CD4-positive, alpha-beta T cell (primary cell): ENCODE measurements at regions of chr14 and their contacts with region 1.

Region 1: GRCh38 chr14:67571272-67571850 is 28.7 kb downstream of the PIGH start:
- DNase-seq: peak; percentile 54 to 81 (median 66)
- ATAC-seq: peak; percentile 93
- H3K4me3 ChIP-seq: no peak overlapping the region
- H3K4me3 Mint-ChIP-seq: no peak overlapping the region
- H3K27ac ChIP-seq: no peak overlapping the region
- H3K27ac Mint-ChIP-seq: no peak overlapping the region
- H3K4me1 ChIP-seq: peaks cover 3% of the 10 kb centered on the region
- H3K4me1 Mint-ChIP-seq: no peaks in the 10 kb centered on the region
- H3K27me3 ChIP-seq: no peaks in the 10 kb centered on the region
- H3K27me3 Mint-ChIP-seq: no peaks in the 10 kb centered on the region
- CTCF ChIP-seq: peak; percentile 87

Region 2: GRCh38 chr14:67019796-67020195 is 551.6 kb before region 1 on chr14:
- CTCF ChIA-PET with region 1: no interaction called
- POLR2A ChIA-PET with region 1: no interaction called
- intact Hi-C with region 1: no loop called
- DNase-seq: no peak
- ATAC-seq: no peak
- H3K4me3 ChIP-seq: no peak overlapping the region
- H3K4me3 Mint-ChIP-seq: no peak overlapping the region
- H3K27ac ChIP-seq: no peak overlapping the region
- H3K27ac Mint-ChIP-seq: no peak overlapping the region
- H3K4me1 ChIP-seq: no peaks in the 10 kb centered on the region
- H3K4me1 Mint-ChIP-seq: no peaks in the 10 kb centered on the region
- H3K27me3 ChIP-seq: no peaks in the 10 kb centered on the region
- H3K27me3 Mint-ChIP-seq: no peaks in the 10 kb centered on the region
- CTCF ChIP-seq: no peak

Region 3: GRCh38 chr14:67426983-67427606 is 144.3 kb before region 1 on chr14:
- CTCF ChIA-PET with region 1: interaction called, 51 read pairs
- POLR2A ChIA-PET with region 1: interaction called, 16 read pairs
- intact Hi-C with region 1: loop called (anchors 1 kb)
- DNase-seq: peak; percentile 59 to 87 (median 67)
- ATAC-seq: peak; percentile 96
- H3K4me3 ChIP-seq: no peak overlapping the region
- H3K4me3 Mint-ChIP-seq: no peak overlapping the region
- H3K27ac ChIP-seq: no peak overlapping the region
- H3K27ac Mint-ChIP-seq: no peak overlapping the region
- H3K4me1 ChIP-seq: peaks cover 5% of the 10 kb centered on the region
- H3K4me1 Mint-ChIP-seq: no peaks in the 10 kb centered on the region
- H3K27me3 ChIP-seq: peaks cover 0 to 9% of the 10 kb centered on the region in 2 experiments
- H3K27me3 Mint-ChIP-seq: peaks cover 20% of the 10 kb centered on the region
- CTCF ChIP-seq: peak; percentile 84

Region 4: GRCh38 chr14:67526676-67527459 is 44.5 kb before region 1 on chr14:
- CTCF ChIA-PET with region 1: interaction called, 5 read pairs
- POLR2A ChIA-PET with region 1: no interaction called
- intact Hi-C with region 1: loop called (anchors 1 to 5 kb)
- DNase-seq: peak in 9 of 14 experiments; percentile 10 to 68 (median 36)
- ATAC-seq: peak; percentile 70
- H3K4me3 ChIP-seq: no peak overlapping the region
- H3K4me3 Mint-ChIP-seq: no peak overlapping the region
- H3K27ac ChIP-seq: no peak overlapping the region
- H3K27ac Mint-ChIP-seq: no peak overlapping the region
- H3K4me1 ChIP-seq: peaks cover 5% of the 10 kb centered on the region
- H3K4me1 Mint-ChIP-seq: no peaks in the 10 kb centered on the region
- H3K27me3 ChIP-seq: peaks cover 13 to 23% of the 10 kb centered on the region in 2 experiments
- H3K27me3 Mint-ChIP-seq: peaks cover 44% of the 10 kb centered on the region
- CTCF ChIP-seq: peak; percentile 59